ENCODE measurements at regions of chr1 and their contacts with region 1.

Region 1: DNA sequence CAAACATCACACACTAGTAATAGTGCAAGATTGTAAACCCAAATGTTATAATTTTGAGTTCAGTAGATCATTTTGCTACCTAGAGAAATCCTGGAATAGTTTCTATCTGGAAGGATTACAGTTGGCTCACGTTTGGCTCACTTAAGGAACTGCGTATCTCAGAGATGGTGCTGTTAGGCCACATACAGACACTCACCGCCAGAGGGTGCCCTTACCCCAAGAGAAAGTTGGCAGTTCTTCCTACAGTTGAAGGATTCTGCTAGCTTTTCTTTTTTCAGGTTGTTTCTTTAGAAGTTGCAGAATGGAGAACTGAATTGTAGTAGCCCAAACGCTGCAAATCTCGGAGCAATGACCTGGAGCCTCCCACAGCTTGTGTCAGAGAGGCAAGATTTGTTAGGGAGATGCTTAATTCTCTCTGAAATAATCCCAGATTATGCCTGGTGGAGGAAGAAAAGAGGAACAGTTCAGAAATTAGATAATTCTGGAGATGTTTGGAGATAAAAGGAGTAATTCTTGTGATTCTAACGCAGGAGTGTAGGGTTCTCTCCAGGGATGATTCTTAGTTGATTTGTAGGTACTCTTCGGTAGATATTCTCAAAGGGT is 87.9 kb upstream of the PAPPA2 start:
- DNase-seq: peak; percentile 70 to 84 (median 74)
- ATAC-seq: peak; percentile 99
- H3K4me3 ChIP-seq: no peak overlapping the region
- H3K27ac ChIP-seq: no peak overlapping the region
- H3K4me1 ChIP-seq: no peaks in the 10 kb centered on the region
- H3K27me3 ChIP-seq: no peaks in the 10 kb centered on the region
- CTCF ChIP-seq: peak; percentile 82 to 91 (median 90)
- EP300 ChIP-seq: no peak
- POLR2A ChIP-seq: no peak
- RAD21 ChIP-seq: peak; percentile 93 to 94

Region 2: GRCh38 chr1:176391621-176392020 is 16.6 kb after region 1 on chr1:
- CTCF ChIA-PET with region 1: no interaction called
- POLR2A ChIA-PET with region 1: no interaction called
- in situ Hi-C with region 1: no loop called
- intact Hi-C with region 1: no loop called
- DNase-seq: no peak
- ATAC-seq: no peak
- H3K4me3 ChIP-seq: no peak overlapping the region
- H3K27ac ChIP-seq: no peak overlapping the region
- H3K4me1 ChIP-seq: no peaks in the 10 kb centered on the region
- H3K27me3 ChIP-seq: no peaks in the 10 kb centered on the region
- CTCF ChIP-seq: no peak
- EP300 ChIP-seq: no peak
- POLR2A ChIP-seq: no peak
- RAD21 ChIP-seq: no peak

Region 3: GRCh38 chr1:176559878-176560277 is 184.8 kb after region 1 on chr1:
- CTCF ChIA-PET with region 1: no interaction called
- POLR2A ChIA-PET with region 1: no interaction called
- in situ Hi-C with region 1: no loop called
- intact Hi-C with region 1: loop called (anchors 2 kb)
- DNase-seq: peak; percentile 82 to 84 (median 84)
- ATAC-seq: peak; percentile 98
- H3K4me3 ChIP-seq: no peak overlapping the region
- H3K27ac ChIP-seq: no peak overlapping the region
- H3K4me1 ChIP-seq: no peaks in the 10 kb centered on the region
- H3K27me3 ChIP-seq: peaks cover 5 to 18% of the 10 kb centered on the region in 2 experiments; a peak in 4 of 5 replicates
- CTCF ChIP-seq: peak; percentile 83 to 92 (median 86)
- EP300 ChIP-seq: no peak
- POLR2A ChIP-seq: no peak
- RAD21 ChIP-seq: peak; percentile 95 to 96

Region 4: GRCh38 chr1:176745945-176746344 is 370.9 kb after region 1 on chr1:
- CTCF ChIA-PET with region 1: no interaction called
- POLR2A ChIA-PET with region 1: no interaction called
- in situ Hi-C with region 1: no loop called
- intact Hi-C with region 1: loop called (anchors 5 kb)
- DNase-seq: peak in 1 of 4 experiments; percentile 21
- ATAC-seq: peak; percentile 77; the same call in 2 of the 3 replicates
- H3K4me3 ChIP-seq: no peak overlapping the region
- H3K27ac ChIP-seq: no peak overlapping the region
- H3K4me1 ChIP-seq: no peaks in the 10 kb centered on the region
- H3K27me3 ChIP-seq: peaks cover 0 to 3% of the 10 kb centered on the region in 2 experiments; a peak in 2 of 5 replicates
- CTCF ChIP-seq: peak; percentile 35 to 56 (median 53); a peak in 5 of 6 replicates
- EP300 ChIP-seq: no peak
- POLR2A ChIP-seq: no peak
- RAD21 ChIP-seq: peak; percentile 8 to 71; a peak in 3 of 4 replicates

Region 5: GRCh38 chr1:176880954-176881595 is 506.0 kb after region 1 on chr1:
- CTCF ChIA-PET with region 1: interaction called, 10 read pairs
- POLR2A ChIA-PET with region 1: no interaction called
- in situ Hi-C with region 1: loop called (anchors 10 kb)
- intact Hi-C with region 1: loop called (anchors 1 kb)
- DNase-seq: peak; percentile 81 to 92 (median 91)
- ATAC-seq: peak; percentile 67
- H3K4me3 ChIP-seq: no peak overlapping the region
- H3K27ac ChIP-seq: peak overlapping the region; percentile 88
- H3K4me1 ChIP-seq: peaks cover 33 to 50% of the 10 kb centered on the region in 2 experiments
- H3K27me3 ChIP-seq: no peaks in the 10 kb centered on the region
- CTCF ChIP-seq: peak; percentile 86 to 96 (median 95)
- EP300 ChIP-seq: peak; percentile 25; the same call in 1 of the 2 replicates
- POLR2A ChIP-seq: no peak
- RAD21 ChIP-seq: peak; percentile 96 to 97